Lower lobe of right lung (tissue), 2 donors: ENCODE measurements at regions of chr1 and their contacts with region 1.

Region 1: DNA sequence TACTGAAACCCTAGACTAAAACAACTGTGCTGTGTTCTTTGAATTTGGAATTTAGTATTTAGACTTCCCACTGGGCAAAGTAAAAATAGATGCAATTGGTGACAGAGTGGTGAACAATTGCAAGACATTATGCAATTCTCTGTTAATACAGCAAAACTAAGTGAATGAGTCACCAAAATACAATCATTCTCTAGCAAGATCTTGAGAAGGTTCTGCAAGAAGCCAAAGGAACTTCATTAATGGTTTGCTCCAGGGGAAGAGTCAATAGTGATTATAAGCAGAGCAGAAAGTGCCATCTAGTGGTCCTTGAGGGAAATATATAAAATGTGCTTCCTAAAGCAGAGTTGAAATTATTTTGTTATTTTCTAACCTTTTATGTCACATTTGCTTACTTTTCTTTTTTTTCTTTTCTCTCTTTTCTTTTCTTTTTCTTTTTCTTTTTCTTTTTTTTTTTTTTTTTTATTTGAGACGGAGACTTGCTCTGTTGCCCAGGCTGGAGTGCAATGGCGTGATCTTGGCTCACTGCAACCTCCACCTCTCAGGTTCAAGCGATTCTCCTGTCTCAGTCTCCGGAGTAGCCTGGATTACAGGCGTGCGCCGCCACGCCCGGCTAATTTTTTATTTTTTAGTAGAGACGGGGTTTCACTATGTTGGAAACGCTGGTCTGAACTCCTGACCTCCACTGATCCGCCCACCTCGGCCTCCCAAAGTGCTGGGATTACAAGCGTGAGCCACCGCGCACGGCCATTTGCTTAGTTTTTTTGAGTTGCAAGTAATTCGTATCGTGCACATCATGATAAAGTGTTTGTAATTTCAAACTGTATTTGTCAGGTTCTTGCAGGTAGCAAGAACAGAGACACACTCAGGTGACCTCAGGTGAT is 99.2 kb downstream of the CTH start:
- DNase-seq: no peak
- ATAC-seq: peak; percentile 79 to 86
- H3K4me3 ChIP-seq: no peak overlapping the region
- H3K27ac ChIP-seq: no peak overlapping the region
- H3K4me1 ChIP-seq: no peaks in the 10 kb centered on the region
- H3K27me3 ChIP-seq: no peaks in the 10 kb centered on the region
- CTCF ChIP-seq: peak; percentile 67

Region 2: GRCh38 chr1:70290218-70290617 is 220.0 kb before region 1 on chr1:
- intact Hi-C with region 1: loop called (anchors 10 kb)
- DNase-seq: no peak
- ATAC-seq: no peak
- H3K4me3 ChIP-seq: no peak overlapping the region
- H3K27ac ChIP-seq: no peak overlapping the region
- H3K4me1 ChIP-seq: no peaks in the 10 kb centered on the region
- H3K27me3 ChIP-seq: no peaks in the 10 kb centered on the region
- CTCF ChIP-seq: no peak

Region 3: DNA sequence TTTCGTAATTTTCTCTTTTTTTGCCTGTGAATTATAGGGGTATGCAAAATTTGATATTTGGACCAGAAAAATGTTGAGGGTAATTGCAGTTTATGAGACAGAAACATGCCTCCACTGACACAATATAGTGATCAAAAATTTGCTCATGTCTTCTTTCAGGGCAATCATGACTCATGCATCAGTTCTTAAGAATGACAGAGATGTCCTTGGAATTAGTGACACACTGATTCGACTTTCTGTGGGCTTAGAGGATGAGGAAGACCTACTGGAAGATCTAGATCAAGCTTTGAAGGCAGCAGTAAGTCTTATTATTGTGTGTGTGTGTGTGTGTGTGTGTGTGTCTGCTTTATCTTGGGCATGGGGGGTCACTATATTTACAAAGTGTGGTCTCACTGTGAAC is 71.7 kb before region 1 on chr1:
- intact Hi-C with region 1: no loop called
- DNase-seq: no peak
- ATAC-seq: no peak
- H3K4me3 ChIP-seq: no peak overlapping the region
- H3K27ac ChIP-seq: no peak overlapping the region
- H3K4me1 ChIP-seq: no peaks in the 10 kb centered on the region
- H3K27me3 ChIP-seq: no peaks in the 10 kb centered on the region
- CTCF ChIP-seq: no peak